ENCODE measurements at regions of chr6 and their contacts with region 1.

Region 1: GRCh38 chr6:17281100-17281494 is at the start of gene RBM24:
- DNase-seq: peak; percentile 65 to 84 (median 80)
- ATAC-seq: peak; percentile 25 to 36
- H3K4me3 ChIP-seq: peak within 1 kb of the TSS; percentile 72
- H3K27ac ChIP-seq: peak within 1 kb of the TSS; percentile 80
- H3K4me1 ChIP-seq: no peaks in the 10 kb centered on the region
- H3K27me3 ChIP-seq: no peaks in the 10 kb centered on the region
- total RNA-seq, gene RBM24: 162 to 196 (median 178) TPM

Region 2: GRCh38 chr6:17167327-17167979 is 113.6 kb before region 1 on chr6:
- intact Hi-C with region 1: loop called in 3 of 4 experiments (anchors 5 to 10 kb)
- DNase-seq: peak; percentile 25 to 71 (median 65)
- ATAC-seq: peak; percentile 83 to 92
- H3K4me3 ChIP-seq: no peak overlapping the region
- H3K27ac ChIP-seq: peak overlapping the region; percentile 23
- H3K4me1 ChIP-seq: no peaks in the 10 kb centered on the region
- H3K27me3 ChIP-seq: no peaks in the 10 kb centered on the region

Region 3: GRCh38 chr6:17178754-17179529 is 102.2 kb before region 1 on chr6:
- intact Hi-C with region 1: loop called in 1 of 4 experiments (anchors 10 kb)
- DNase-seq: no peak
- ATAC-seq: no peak
- H3K4me3 ChIP-seq: no peak overlapping the region
- H3K27ac ChIP-seq: no peak overlapping the region
- H3K4me1 ChIP-seq: no peaks in the 10 kb centered on the region
- H3K27me3 ChIP-seq: no peaks in the 10 kb centered on the region

Region 4: GRCh38 chr6:17392978-17393891 is 112.1 kb after region 1 on chr6 and contains the start of gene CAP2:
- intact Hi-C with region 1: loop called in 1 of 4 experiments (anchors 10 kb)
- DNase-seq: peak; percentile 61 to 86 (median 82)
- ATAC-seq: peak; percentile 93 to 95
- H3K4me3 ChIP-seq: peak within 1 kb of the TSS; percentile 93
- H3K27ac ChIP-seq: peak within 1 kb of the TSS; percentile 86
- H3K4me1 ChIP-seq: no peaks in the 10 kb centered on the region
- H3K27me3 ChIP-seq: no peaks in the 10 kb centered on the region
- total RNA-seq, gene CAP2: 90.7 to 127 (median 111) TPM

Region 5: DNA sequence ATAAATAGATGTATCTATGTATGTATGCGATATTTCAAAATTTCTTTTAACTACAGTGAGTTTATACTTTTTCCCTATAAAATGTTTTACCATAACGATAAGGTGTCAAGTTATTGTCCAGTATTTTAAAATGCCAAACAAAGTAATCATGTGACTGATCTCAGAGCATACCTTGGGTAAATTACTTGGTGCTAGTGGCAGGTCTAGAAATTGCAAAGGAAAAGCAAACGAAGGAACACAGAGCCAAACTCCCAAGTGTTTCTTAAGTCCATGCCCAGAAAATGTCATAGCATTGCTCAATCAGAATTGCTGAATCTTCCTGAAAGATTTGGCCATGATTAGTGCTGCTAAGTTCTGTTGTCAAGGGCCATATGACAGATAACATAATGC is 189.8 kb after region 1 on chr6:
- intact Hi-C with region 1: loop called in 1 of 4 experiments (anchors 10 kb)
- DNase-seq: no peak
- ATAC-seq: peak in 1 of 2 donors; percentile 47
- H3K4me3 ChIP-seq: no peak overlapping the region
- H3K27ac ChIP-seq: no peak overlapping the region
- H3K4me1 ChIP-seq: peaks cover 3% of the 10 kb centered on the region
- H3K27me3 ChIP-seq: no peaks in the 10 kb centered on the region